Aorta (tissue), 5 donors: ENCODE measurements at regions of chr1 and their contacts with region 1.

Region 1: DNA sequence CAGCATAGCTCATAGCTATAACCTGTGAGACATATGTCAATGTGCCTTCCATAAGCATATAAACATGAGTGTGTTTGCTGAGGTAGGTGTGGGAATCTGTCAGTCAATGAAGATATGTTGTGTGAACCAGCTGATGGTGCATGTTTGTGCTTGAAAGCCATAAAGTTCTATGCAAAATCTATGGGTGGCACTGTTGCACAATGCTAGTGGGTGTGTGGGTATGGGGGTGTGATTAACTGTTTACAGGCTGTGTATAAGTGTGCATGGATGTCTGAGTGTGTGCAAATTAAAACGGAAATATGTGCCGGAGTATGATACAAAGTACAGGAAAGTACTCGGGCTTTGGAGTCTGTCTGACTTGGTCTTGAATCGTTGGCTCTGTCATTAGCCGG is 1.0 kb upstream of the ATP2B4 start:
- DNase-seq: no peak
- ATAC-seq: peak; percentile 54
- H3K4me3 ChIP-seq: no peak overlapping the region
- H3K27ac ChIP-seq: no peak overlapping the region
- H3K4me1 ChIP-seq: peaks cover 0 to 2% of the 10 kb centered on the region in 2 donors
- H3K27me3 ChIP-seq: no peaks in the 10 kb centered on the region

Region 2: DNA sequence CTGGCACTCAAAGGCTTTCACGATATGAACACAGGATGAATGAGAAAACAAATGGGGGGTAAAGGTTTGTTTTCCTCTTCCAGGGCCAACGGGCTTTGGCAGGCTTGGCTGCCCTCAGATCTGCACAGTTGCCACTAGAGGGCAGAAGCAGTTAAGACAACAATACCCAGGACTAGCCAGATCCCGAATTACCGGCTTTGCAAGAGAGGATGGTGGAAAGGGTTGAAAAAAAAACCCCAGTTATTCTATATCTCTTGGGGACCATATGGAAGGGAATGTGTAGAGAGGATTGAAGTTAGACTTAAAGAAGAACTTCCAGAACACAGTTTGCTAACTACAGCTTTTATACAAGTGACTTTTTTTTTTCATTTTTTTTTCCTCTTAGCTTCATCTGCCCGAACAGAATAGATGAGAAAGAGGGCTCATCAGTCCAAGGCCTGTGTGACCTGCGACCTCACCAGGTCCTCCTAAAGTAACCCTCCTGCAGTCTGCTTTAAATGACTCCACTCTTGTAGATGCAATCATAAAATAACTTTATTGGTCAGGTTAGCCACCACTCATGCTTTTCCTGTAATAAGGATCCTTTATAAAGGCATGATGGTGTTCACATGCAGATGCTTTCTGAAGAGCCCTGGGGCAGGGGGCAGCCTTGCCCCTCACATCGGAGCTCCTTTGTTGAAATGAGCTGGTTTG is 285.4 kb before region 1 on chr1:
- intact Hi-C with region 1: no loop called
- DNase-seq: peak in 1 of 2 donors; percentile 70
- ATAC-seq: peak; percentile 82
- H3K4me3 ChIP-seq: no peak overlapping the region
- H3K27ac ChIP-seq: no peak overlapping the region
- H3K4me1 ChIP-seq: no peaks in the 10 kb centered on the region
- H3K27me3 ChIP-seq: no peaks in the 10 kb centered on the region

Region 3: GRCh38 chr1:203522237-203522636 is 103.4 kb before region 1 on chr1:
- intact Hi-C with region 1: no loop called
- DNase-seq: no peak
- ATAC-seq: no peak
- H3K4me3 ChIP-seq: no peak overlapping the region
- H3K27ac ChIP-seq: no peak overlapping the region
- H3K4me1 ChIP-seq: no peaks in the 10 kb centered on the region
- H3K27me3 ChIP-seq: no peaks in the 10 kb centered on the region

Region 4: DNA sequence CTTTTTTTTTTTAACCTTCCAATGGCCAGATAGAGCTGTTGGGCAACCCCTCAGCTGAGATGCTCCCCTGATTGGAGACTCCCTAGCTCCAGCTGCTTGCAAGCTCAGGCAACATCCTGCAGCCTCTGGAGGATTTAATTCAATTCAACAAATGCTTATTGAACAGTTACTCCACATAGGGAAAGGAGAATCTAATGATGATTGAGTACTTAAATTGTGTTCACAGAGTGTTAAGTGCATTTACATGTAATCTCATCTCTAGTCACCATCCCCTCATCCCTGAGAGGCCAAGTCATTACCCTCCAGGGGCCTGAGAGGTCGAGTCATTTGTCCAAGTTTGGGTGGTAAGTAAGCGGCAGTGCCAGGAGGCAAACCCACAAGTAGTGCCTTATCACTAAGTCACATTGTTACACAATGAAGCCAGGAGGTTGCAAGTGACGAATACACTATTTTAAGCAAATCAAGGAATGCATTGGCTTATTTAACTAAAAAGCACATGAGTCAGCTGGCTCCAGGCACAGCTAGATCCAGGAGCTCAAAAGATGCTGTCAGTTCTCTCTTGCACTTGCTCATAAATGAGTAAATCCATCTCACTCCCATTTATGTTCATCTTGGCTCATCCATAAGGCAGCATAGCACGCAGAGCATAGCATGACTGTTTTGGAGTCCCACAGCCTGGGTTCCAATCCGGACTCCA is 67.4 kb before region 1 on chr1:
- intact Hi-C with region 1: loop called (anchors 2 kb)
- DNase-seq: peak; percentile 85 to 89
- ATAC-seq: peak; percentile 83
- H3K4me3 ChIP-seq: no peak overlapping the region
- H3K27ac ChIP-seq: peak overlapping the region; percentile 99
- H3K4me1 ChIP-seq: peaks cover 3 to 4% of the 10 kb centered on the region in 2 donors
- H3K27me3 ChIP-seq: no peaks in the 10 kb centered on the region

Region 5: DNA sequence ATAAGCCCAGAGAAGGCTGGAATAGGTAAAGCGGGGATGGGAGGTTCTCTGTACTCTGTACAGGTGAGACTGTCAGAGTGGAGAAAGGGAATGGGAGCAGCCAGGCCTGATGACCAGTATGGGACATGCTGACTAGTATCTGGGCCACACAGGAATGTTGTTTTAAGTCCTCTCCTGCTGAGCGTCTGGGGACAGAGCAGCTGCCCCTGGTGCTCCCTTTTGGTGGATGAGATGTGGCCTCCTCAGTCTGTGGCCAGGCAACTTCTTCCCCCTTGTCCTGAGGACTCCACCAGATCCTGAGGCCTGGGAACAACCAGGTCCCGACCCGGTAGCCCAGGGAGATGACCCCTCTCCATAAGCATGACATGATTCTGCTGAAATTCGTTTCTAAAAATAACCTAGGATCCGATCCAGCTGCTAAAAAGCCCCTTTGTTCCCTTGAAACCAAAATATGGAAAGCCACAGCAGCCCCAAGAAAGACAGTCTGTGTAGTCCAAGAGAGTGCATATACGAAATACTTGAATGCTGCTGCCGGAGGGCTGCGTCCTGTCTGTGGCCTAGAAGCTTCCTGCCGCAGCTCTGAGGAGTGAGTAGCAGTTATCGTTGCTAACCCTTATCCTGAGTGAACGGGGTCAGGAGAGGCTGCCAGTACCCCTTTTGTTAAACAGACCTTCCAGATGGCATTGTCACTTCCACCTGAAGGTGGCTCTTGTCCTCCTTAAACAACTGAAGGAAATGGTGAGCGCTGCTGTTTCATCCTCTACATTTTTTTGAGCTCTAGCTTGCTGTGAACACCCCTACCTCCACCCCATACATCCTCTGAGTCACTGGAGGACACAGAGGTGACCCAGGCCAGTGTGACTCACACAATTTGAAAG is 48.2 kb after region 1 on chr1:
- intact Hi-C with region 1: loop called in 1 of 2 experiments (anchors 5 kb)
- DNase-seq: peak; percentile 66 to 80
- ATAC-seq: peak; percentile 79
- H3K4me3 ChIP-seq: no peak overlapping the region
- H3K27ac ChIP-seq: peak overlapping the region; percentile 61 to 98
- H3K4me1 ChIP-seq: peaks cover 2 to 6% of the 10 kb centered on the region in 2 donors
- H3K27me3 ChIP-seq: no peaks in the 10 kb centered on the region

Region 6: DNA sequence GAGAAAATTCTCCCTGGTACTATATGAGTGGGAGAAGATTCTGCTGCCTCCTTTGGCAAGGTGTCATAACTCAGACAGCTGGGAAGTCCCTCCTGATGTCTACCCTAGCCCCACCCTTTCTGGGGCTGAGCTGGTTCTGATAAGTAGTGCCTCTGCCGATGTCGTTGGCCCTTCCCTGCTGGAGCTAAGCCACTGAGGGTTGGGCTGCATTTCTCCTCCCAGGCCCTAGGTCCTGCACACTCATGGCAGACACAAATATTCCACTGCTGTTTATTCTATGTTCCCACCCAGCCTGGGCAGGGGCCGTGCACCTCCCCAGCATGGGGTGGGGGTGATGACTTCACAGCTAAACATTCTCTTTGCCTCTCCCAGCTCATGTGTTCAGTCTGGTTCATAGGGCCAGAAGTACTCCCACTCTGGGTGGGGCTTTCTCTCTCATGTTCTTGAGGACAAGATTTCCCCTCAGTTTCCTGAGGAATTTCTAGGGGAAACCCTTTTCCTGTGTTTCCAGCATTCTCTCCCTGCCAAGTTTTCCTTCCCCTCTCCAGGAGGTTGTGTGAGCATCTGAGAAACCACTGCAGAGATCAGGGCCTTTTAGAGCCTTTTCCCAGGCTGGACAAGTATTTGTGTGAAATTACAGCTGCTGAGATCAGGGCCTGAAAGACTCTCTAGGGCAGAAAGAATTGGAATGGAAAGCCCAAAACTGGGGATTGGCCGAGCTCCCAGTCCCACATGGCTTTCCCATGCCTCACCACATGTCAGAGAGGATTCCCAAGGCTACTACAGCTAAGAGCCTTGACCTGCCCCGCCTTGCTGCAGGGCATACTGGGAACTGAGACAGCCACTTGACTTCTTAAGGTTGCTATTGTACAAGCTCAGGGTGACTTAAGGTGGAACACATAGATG is 67.2 kb after region 1 on chr1:
- intact Hi-C with region 1: loop called (anchors 1 to 2 kb)
- DNase-seq: peak; percentile 91 to 93
- ATAC-seq: peak; percentile 91
- H3K4me3 ChIP-seq: no peak overlapping the region
- H3K27ac ChIP-seq: peak overlapping the region; percentile 58 to 69
- H3K4me1 ChIP-seq: peaks cover 0 to 4% of the 10 kb centered on the region in 2 donors
- H3K27me3 ChIP-seq: no peaks in the 10 kb centered on the region